Activated T-helper 2 cell treated with anti-CD3 and anti-CD28 coated beads, Interferon-gamma antibody, Interleukin-2, Interleukin-4, amounts not matched to agents 10 μg/mL and 5 μg/mL and 100 μg/mL, durations not matched to agents 14 hours and 24 hours and 36 hours (primary cell): ENCODE measurements at regions of chr10 and their contacts with region 1.

Region 1: GRCh38 chr10:72107325-72108003 is 19.1 kb upstream of the SPOCK2 start:
- DNase-seq: no peak
- H3K4me3 Mint-ChIP-seq: peak overlapping the region; percentile 74
- H3K27ac Mint-ChIP-seq: peak overlapping the region; percentile 93
- H3K4me1 Mint-ChIP-seq: peaks cover 54% of the 10 kb centered on the region
- H3K27me3 Mint-ChIP-seq: no peaks in the 10 kb centered on the region

Region 2: DNA sequence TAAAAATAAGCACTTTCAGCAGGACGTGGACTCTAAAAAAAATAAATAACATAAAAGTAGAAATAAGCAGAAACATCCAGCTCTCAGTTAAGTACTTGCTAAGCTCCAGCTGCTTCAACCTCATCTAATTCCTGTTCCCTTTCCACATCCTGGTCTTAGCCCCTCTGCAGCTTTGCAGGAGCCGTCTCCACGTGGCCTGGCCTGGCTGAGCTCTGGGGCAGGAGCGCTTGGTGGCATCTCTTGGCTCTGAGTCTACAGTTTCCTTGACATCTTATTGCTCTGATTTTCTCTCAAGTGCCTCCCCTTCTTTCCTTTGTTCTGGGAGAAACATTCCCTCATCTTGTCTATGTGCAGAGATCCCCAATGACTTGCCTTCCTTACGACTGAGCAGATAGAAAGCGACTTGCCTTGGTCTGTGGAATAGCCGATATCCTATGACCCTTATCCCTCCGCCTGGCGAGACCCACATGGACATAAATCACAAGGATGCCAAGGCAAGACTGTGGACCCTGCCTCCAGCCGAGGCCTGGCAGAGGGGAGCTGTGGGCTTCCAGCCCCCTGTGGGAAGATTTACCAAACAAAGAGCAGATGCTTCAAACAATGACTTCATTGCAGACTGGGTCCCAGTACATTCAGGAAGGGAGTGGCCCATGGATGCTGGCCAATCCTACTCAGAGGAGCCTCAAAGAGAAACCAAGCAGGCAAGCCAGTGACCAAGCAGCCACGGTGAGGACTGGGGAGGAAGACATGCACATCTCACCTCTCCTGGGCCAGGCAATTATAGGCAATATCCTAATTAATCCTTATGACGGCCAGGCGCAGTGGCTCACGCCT is 81.0 kb before region 1 on chr10:
- intact Hi-C with region 1: no loop called
- DNase-seq: no peak
- H3K4me3 Mint-ChIP-seq: no peak overlapping the region
- H3K27ac Mint-ChIP-seq: no peak overlapping the region
- H3K4me1 Mint-ChIP-seq: peaks cover 4% of the 10 kb centered on the region
- H3K27me3 Mint-ChIP-seq: peaks cover 5% of the 10 kb centered on the region

Region 3: DNA sequence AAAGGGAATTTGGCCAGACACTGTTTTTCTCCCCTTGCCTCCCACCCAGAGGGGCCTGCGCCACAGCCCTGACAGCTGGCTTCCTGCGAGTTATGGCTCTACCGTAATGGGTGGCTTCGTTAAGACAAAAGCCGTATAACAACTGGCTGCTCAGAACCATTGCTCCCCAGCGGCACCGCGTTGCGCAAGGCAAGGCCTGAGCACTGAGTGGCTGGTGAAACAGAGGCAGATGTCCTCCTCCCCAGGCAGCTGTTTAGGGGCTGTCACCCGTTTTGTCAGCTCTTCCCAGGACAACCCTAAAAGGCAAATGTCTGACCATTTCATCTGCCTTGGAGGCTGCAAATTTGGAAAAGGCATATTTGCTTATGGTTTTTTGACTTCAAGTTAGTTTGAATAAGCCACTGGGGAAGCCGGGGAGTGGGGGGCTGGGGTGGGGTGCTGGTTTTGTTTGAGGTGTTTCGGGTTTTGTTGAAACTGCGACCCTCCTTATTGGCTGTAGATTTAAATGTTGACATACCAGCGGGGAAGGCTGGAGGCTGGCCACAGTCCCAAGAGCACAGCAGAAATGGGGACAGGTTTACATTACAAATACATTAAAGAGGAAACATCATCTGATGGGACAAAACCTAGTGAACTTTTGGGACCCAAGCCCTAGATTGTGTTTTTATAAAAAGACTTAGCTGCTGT is 18.4 kb before region 1 on chr10:
- intact Hi-C with region 1: loop called (anchors 2 kb)
- DNase-seq: peak; percentile 35
- H3K4me3 Mint-ChIP-seq: peak overlapping the region; percentile 99
- H3K27ac Mint-ChIP-seq: peak overlapping the region; percentile 99
- H3K4me1 Mint-ChIP-seq: peaks cover 49% of the 10 kb centered on the region
- H3K27me3 Mint-ChIP-seq: no peaks in the 10 kb centered on the region